Sciatic nerve (tissue), 2 donors: ENCODE measurements at regions of chr2 and their contacts with region 1.

Region 1: DNA sequence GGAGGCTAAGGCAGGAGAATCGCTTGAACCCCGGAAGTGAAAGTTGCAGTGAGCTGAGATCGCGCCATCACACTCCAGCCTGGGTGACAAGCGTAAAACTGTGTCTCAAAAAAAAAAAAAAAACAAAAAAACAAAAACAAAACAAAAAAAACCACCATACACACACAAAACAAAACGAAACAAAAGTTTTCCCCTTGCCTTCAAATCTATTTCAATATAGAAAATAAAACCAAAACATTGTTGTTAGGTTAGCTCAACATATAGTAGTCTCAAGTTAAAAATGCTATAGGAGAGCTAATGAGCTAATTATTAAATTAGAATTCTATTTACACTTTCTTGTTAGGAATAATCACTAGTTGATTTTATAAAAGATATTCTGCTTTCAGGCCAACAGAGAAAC is 43.3 kb downstream of the FBXO11 start:
- DNase-seq: no peak
- ATAC-seq: no peak

Region 2: DNA sequence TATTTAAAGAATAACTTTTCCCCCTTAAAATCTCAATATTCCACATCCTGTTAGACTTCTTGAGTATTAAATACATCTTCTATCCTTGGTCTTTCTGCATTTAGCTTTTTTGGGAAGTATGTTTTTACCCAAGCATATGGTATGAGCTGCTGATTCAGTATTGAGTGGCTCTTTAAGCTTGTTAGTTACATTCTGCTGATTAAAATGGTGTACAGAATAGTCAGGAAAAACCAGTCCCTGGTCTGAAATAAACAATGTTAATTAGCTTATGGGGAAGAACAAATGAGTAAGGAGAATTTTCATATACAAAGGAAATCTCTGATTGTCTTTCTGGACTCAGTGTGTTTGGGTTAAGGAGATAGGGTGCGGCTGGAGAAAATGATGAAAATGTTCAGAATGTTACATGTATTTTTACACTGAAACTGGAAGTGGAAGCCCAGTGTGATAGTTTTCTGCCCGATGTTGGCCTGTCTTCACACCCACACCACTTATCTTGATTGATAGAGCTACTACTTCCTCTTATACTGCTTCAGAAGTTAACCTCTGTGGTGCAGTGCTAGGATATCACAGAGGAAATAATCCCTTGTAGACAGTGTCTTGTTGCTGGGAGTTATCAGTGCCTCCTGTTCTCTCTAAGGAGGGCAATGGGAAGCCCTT is 376.0 kb before region 1 on chr2:
- intact Hi-C with region 1: no loop called
- DNase-seq: no peak
- ATAC-seq: no peak

Region 3: GRCh38 chr2:48107326-48107925 is 244.5 kb after region 1 on chr2:
- intact Hi-C with region 1: loop called (anchors 5 kb)
- DNase-seq: no peak
- ATAC-seq: no peak